ENCODE measurements at regions of chr14 and their contacts with region 1.

Region 1: GRCh38 chr14:76924371-76925096 is 98.3 kb downstream of the LRRC74A start:
- DNase-seq: peak; percentile 86
- ATAC-seq: peak; percentile 68
- H3K4me3 Mint-ChIP-seq: peak overlapping the region; percentile 46
- H3K27ac Mint-ChIP-seq: peak overlapping the region; percentile 98
- H3K4me1 Mint-ChIP-seq: peaks cover 92% of the 10 kb centered on the region
- H3K27me3 Mint-ChIP-seq: no peaks in the 10 kb centered on the region
- CTCF ChIP-seq: no peak

Region 2: DNA sequence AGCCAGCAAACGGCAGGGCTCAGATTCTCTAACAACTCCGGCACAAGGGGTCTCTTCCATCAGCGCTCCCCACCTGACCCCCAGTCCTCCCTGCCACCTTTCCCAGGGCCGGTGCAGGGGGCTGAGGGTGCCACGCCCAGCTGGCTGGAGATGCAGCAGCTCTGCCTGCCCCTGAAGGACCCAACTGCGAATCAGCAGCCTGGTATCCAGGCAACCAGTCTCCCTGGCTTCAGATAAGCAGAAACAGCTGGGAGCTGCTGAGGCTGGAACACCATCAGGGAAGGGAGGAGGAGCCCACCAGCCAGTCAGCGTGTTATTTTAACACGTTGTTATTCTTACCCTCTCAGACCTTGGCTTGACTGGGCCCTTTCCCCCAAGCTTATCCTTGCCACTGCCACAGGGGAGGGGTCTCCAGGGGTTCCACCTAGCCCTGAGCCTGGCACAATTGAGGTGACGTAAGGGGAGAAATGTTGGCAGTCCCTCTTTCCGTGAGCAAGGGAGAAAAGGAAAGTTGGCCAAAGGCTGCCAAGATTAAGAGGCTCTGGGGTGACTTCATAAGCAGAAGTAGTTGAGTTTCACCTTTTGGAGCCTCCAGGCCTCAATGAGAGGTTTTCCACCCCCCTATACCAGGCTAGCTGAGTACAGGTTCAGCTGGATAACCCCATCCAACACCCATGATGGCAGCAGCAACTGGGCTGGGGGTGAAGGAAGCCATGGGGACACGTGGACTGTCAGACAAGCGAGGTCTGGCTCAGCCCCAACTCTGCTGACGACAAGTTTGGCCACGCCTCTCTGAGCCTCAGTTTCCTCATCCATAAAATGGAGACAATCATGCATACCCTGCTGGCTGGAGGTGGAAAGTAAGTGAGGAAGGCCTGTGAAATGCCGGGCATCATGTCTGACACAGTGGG is 12.9 kb after region 1 on chr14:
- CTCF ChIA-PET with region 1: interaction called, 11 read pairs
- POLR2A ChIA-PET with region 1: no interaction called
- DNase-seq: no peak
- ATAC-seq: peak; percentile 53
- H3K4me3 Mint-ChIP-seq: no peak overlapping the region
- H3K27ac Mint-ChIP-seq: peak overlapping the region; percentile 76; the same call in 1 of the 2 replicates
- H3K4me1 Mint-ChIP-seq: peaks cover 60% of the 10 kb centered on the region
- H3K27me3 Mint-ChIP-seq: no peaks in the 10 kb centered on the region
- CTCF ChIP-seq: no peak

Region 3: DNA sequence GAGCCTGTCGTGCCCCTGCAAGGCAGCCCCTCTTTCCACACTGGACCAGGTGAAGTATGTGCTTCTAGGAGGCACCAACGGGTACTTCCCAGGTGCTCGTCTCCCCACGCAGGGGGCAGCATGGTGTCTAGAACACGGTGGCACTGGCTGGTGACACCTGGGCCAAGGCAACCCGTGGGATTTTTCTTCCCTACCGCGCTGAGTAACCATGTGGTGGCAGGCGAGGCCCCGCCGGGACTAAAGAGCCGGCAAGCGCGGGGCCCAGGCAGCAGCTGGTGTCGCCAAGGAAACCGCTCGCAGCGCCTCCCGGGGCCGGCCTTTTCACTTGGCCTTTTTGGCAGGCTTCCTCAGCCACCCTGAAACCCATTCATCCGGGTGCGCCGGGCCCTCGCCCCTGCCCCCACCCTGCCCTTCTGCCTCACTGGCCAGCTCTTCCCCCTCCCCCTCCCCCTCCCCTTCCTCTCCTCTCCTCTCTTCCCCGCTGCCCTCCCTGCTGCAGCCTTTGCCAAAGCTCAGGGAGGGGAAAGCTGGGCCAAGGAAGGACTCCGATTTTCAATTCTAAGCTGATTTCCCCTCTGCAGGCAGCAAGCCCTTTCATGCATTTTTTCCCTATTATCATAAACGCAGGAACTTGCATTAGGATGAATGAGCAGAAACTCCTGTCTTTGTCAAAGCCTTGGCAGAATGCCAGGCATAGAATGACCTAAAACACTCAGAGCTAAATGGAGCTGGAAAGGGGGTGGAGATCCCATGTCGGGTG is 22.7 kb after region 1 on chr14:
- CTCF ChIA-PET with region 1: interaction called, 20 read pairs
- POLR2A ChIA-PET with region 1: interaction called, 12 read pairs
- DNase-seq: peak; percentile 94
- ATAC-seq: peak; percentile 82
- H3K4me3 Mint-ChIP-seq: peak overlapping the region; percentile 49
- H3K27ac Mint-ChIP-seq: peak overlapping the region; percentile 99
- H3K4me1 Mint-ChIP-seq: peaks cover 51% of the 10 kb centered on the region
- H3K27me3 Mint-ChIP-seq: no peaks in the 10 kb centered on the region
- CTCF ChIP-seq: no peak

Region 4: DNA sequence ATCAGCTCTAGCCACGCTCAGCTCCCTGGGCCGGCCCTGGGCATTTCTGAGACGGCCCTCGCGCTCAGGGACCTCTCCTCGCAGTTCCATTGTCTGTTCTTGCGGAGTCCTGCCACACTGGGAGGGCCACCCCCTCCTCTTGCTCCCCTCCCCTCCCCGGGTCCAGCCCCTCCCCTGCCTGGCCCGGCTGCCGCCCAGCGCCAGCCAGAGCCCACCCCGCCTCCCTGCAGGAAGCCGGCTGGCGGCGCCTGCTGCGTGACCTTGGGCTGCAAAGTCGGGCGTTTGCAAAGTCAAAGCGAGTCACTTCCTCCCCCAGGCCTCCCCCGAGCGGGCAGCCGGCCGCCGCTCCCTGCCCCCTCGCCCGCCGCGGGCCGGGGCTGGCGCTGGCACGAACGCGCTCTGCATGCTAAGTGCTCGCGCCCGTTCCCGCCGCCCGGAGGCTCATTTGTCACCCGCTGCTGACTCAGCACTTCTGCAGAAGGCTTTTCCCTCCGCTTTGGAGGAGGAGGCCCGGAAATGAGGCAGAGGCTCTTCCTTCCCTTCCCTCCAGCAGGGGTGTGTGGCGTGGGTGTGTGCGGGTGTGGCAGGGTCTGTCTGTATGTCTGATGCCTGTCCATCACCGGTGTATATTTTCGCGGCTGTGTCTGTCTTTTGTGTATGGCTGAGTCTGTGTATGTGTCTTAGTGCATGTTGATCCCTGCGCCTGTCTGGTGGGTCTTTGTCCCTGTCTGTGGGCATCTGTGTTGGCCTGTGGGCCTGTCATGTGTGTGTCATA is 32.0 kb after region 1 on chr14:
- CTCF ChIA-PET with region 1: interaction called, 21 read pairs
- POLR2A ChIA-PET with region 1: interaction called, 11 read pairs
- DNase-seq: peak; percentile 92
- ATAC-seq: peak; percentile 71
- H3K4me3 Mint-ChIP-seq: peak overlapping the region; percentile 55
- H3K27ac Mint-ChIP-seq: peak overlapping the region; percentile 98
- H3K4me1 Mint-ChIP-seq: peaks cover 71% of the 10 kb centered on the region
- H3K27me3 Mint-ChIP-seq: no peaks in the 10 kb centered on the region
- CTCF ChIP-seq: no peak

Measured in WTC11 (cell line).